ENCODE measurements at regions of chr9 and their contacts with region 1.

Region 1: DNA sequence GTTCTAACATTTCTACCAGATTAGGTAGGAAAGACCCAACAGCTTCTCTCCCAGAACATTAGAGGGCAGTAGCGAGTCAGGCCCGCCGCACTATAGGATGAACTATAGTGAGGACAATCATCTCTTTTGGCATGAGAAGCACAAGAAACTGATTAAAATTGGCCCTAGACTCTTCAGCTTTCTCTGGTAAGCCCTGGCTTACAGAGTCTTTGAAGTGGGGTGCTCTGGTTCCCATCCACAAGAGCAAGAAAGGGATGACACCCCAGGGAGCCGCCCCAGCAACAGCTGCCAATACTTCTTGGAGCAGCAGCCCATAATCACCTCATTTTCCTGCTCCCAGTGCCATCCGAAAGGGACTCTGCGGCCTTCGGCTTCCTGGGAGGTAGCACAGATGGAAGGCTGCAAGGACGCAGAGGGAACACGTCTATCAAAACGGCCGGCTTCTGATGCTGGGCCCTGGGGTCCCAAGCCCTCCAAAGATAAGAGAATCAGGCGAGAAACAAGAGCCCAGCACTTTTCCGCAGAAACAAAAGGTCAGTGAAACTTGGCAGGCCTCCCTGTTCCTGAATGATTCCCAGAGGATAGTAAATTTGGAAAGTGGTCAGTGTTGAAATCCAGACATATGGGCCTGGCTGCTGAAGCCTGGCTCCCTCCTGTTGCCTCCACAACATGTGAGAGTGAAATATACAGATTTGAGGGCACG is 69.3 kb downstream of the HSD17B3 start:
- DNase-seq: peak; percentile 82
- H3K27ac ChIP-seq: no peak overlapping the region
- CTCF ChIP-seq: peak; percentile 99

Region 2: GRCh38 chr9:96158909-96159575 is 73.6 kb before region 1 on chr9:
- CTCF ChIA-PET with region 1: no interaction called
- POLR2A ChIA-PET with region 1: no interaction called
- DNase-seq: no peak
- H3K27ac ChIP-seq: no peak overlapping the region
- CTCF ChIP-seq: no peak

Region 3: DNA sequence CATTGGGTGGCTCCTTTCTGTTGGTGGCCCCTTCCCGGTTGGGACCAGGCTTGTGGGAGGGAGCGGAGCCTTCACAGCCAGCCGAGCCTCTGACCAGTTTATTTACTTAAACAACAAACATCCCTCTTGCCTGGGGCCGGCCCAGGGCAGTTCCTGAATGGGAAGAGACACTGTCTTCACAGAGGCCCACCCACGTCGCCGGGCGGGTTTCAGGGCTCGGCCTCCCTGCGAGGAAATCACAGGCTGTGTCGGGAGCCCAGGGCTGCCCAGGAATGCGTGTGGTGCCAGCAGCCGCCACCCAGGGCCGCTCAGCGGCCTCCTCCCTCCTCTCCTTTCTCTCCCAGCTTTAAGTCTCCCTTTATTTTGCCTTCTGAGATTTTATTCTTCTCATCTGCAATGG is 63.2 kb before region 1 on chr9:
- CTCF ChIA-PET with region 1: no interaction called
- POLR2A ChIA-PET with region 1: no interaction called
- DNase-seq: no peak
- H3K27ac ChIP-seq: no peak overlapping the region
- CTCF ChIP-seq: no peak

Region 4: GRCh38 chr9:96186591-96187011 is 46.1 kb before region 1 on chr9:
- CTCF ChIA-PET with region 1: no interaction called
- POLR2A ChIA-PET with region 1: no interaction called
- DNase-seq: peak; percentile 83
- H3K27ac ChIP-seq: peak overlapping the region; percentile 88
- CTCF ChIP-seq: no peak

Region 5: GRCh38 chr9:96217754-96218693 is 14.7 kb before region 1 on chr9:
- CTCF ChIA-PET with region 1: interaction called, 12 read pairs
- POLR2A ChIA-PET with region 1: no interaction called
- DNase-seq: peak; percentile 92
- H3K27ac ChIP-seq: peak overlapping the region; percentile 48
- CTCF ChIP-seq: peak; percentile 100

Region 6: GRCh38 chr9:96249746-96250145 is 17.1 kb after region 1 on chr9:
- CTCF ChIA-PET with region 1: interaction called, 16 read pairs
- POLR2A ChIA-PET with region 1: no interaction called
- DNase-seq: no peak
- H3K27ac ChIP-seq: no peak overlapping the region
- CTCF ChIP-seq: no peak

Region 7: GRCh38 chr9:96327694-96328352 is 95.1 kb after region 1 on chr9:
- CTCF ChIA-PET with region 1: interaction called, 16 read pairs
- POLR2A ChIA-PET with region 1: no interaction called
- DNase-seq: peak; percentile 74
- H3K27ac ChIP-seq: no peak overlapping the region
- CTCF ChIP-seq: peak; percentile 99

Measured in RWPE1 (cell line).